HepG2 (cell line): ENCODE measurements at regions of chr1 and their contacts with region 1.

Region 1: GRCh38 chr1:170010443-170010842 is 64.1 kb downstream of the KIFAP3 start:
- DNase-seq: peak; percentile 44
- ATAC-seq: no peak
- H3K4me3 ChIP-seq: no peak overlapping the region
- H3K27ac ChIP-seq: no peak overlapping the region
- H3K4me1 ChIP-seq: no peaks in the 10 kb centered on the region
- H3K27me3 ChIP-seq: no peaks in the 10 kb centered on the region; a peak in 1 of 5 replicates
- CTCF ChIP-seq: peak; percentile 48
- EP300 ChIP-seq: no peak
- POLR2A ChIP-seq: no peak
- RAD21 ChIP-seq: no peak

Region 2: GRCh38 chr1:169970114-169970513 is 40.3 kb before region 1 on chr1:
- CTCF ChIA-PET with region 1: no interaction called
- POLR2A ChIA-PET with region 1: no interaction called
- in situ Hi-C with region 1: no loop called
- intact Hi-C with region 1: no loop called
- DNase-seq: no peak
- ATAC-seq: no peak
- H3K4me3 ChIP-seq: no peak overlapping the region
- H3K27ac ChIP-seq: no peak overlapping the region
- H3K4me1 ChIP-seq: no peaks in the 10 kb centered on the region
- H3K27me3 ChIP-seq: no peaks in the 10 kb centered on the region
- CTCF ChIP-seq: no peak
- EP300 ChIP-seq: no peak
- POLR2A ChIP-seq: no peak
- RAD21 ChIP-seq: no peak

Region 3: DNA sequence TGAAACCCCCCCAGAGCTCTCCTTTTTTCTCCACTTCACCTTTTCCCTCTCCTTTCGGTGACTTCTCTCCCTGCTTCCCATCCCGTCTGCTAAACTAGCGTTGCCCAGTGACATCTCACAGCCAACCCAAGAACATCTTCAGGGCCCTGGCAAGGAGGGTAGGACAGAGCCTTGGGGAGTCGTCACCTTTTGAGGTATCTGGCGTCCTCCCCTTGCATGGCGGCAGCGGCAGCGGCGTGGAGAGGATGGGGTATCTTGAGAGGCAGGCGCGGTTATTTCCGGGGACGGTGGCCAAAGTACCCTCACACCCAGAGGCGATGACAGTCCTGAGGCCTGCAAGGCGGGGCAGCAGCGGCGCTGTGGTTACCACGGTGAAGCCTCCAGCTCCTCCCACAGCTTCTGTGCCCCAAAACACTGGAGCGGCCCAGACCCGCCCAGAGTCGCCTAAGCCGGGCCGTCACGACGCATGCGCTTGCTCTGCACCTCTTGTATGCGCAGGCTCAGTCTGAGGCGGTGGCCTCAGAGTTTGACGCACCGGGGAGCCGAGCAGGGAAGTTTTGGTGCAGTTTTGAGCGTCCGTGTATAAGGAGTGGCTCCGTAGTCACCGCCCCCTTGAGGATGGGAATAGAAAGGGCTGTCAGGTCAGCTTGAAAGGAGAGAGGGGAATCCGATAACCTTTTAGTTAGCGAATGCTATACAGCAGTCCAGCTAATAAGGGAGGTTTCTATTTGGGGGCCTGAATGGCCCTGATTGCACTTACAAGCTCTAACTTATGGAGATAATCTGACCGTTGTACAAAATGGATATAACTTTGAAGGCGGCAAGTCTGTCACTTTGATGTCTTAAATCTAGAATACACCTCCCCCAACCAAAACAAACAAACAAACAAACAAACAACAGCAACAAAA is 64.1 kb after region 1 on chr1 and contains the start of gene KIFAP3:
- CTCF ChIA-PET with region 1: no interaction called
- POLR2A ChIA-PET with region 1: no interaction called
- in situ Hi-C with region 1: no loop called
- intact Hi-C with region 1: loop called (anchors 1 kb)
- DNase-seq: peak; percentile 97
- ATAC-seq: peak; percentile 99
- H3K4me3 ChIP-seq: peak within 1 kb of the TSS; percentile 68 to 91 (median 80)
- H3K27ac ChIP-seq: peak within 1 kb of the TSS; percentile 53
- H3K4me1 ChIP-seq: peaks cover 15% of the 10 kb centered on the region
- H3K27me3 ChIP-seq: no peaks in the 10 kb centered on the region; a peak in 1 of 5 replicates
- CTCF ChIP-seq: peak; percentile 78
- EP300 ChIP-seq: no peak
- POLR2A ChIP-seq: peak in 1 of 2 experiments; percentile 40; a peak in 2 of 4 replicates
- RAD21 ChIP-seq: no peak
- total RNA-seq, gene KIFAP3: 10.0 and 13.1 TPM in 2 replicates

Region 4: GRCh38 chr1:170445096-170445495 is 434.7 kb after region 1 on chr1:
- CTCF ChIA-PET with region 1: no interaction called
- POLR2A ChIA-PET with region 1: no interaction called
- in situ Hi-C with region 1: no loop called
- intact Hi-C with region 1: loop called (anchors 2 kb)
- DNase-seq: no peak
- ATAC-seq: no peak
- H3K4me3 ChIP-seq: no peak overlapping the region
- H3K27ac ChIP-seq: no peak overlapping the region
- H3K4me1 ChIP-seq: no peaks in the 10 kb centered on the region
- H3K27me3 ChIP-seq: no peaks in the 10 kb centered on the region
- CTCF ChIP-seq: no peak
- EP300 ChIP-seq: no peak
- POLR2A ChIP-seq: no peak
- RAD21 ChIP-seq: no peak

Region 5: DNA sequence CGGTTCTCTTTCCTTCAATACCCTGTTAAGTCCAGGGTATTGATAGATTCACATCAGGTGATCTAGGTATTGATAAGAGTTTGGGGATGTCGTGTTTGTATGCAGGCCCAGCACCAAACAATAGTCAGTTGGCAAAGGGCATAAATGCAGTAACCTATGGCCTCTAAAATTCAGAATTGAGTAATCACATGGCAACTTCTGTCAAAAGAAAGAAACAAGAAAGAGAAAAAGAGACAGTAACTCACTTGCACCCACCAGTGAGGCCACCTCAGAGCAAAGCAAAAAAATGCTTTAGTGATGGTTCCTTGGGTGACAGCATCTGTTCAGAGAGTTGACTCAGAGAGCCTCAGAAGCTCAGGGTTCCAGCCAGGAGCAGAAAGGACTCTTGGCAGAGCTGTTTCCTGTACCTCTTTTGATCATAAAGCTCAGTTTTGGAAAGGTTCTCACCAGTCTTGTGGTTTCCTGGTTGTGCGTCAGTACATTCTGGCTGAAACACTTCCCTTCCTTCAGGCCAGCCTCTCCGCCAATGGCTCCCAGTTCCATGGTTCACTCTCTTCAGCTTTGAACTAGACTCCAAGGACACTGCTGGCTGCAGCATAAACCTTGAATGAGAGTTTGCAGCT is 451.4 kb after region 1 on chr1:
- CTCF ChIA-PET with region 1: interaction called, 3 read pairs
- POLR2A ChIA-PET with region 1: no interaction called
- in situ Hi-C with region 1: no loop called
- intact Hi-C with region 1: loop called (anchors 2 kb)
- DNase-seq: no peak
- ATAC-seq: no peak
- H3K4me3 ChIP-seq: no peak overlapping the region
- H3K27ac ChIP-seq: no peak overlapping the region
- H3K4me1 ChIP-seq: no peaks in the 10 kb centered on the region
- H3K27me3 ChIP-seq: no peaks in the 10 kb centered on the region
- CTCF ChIP-seq: no peak
- EP300 ChIP-seq: no peak
- POLR2A ChIP-seq: no peak
- RAD21 ChIP-seq: no peak